Aorta (tissue), 5 donors: ENCODE measurements at regions of chr2 and their contacts with region 1.

Region 1: DNA sequence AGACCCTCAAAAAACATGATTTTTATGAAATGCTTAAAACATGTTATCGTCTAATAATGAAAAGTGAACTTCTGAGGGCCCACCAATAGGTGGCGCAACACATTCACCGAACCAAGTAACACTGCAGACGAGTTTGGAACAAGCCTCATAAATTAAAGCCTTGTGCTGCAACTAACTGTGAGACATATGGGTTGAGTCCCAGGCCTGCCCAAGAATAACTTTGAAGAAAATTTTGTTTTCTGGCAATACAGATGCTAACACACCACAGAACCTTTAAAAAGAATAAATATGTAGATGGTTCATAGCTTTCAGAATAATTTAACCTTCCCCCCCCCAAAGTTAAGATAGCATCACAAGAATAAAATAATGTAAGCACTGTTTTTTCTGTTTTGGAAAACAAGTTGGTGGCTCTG is 285.8 kb downstream of the RNF144A start:
- DNase-seq: peak in 1 of 2 donors; percentile 59
- ATAC-seq: peak; percentile 84
- H3K4me3 ChIP-seq: no peak overlapping the region
- H3K27ac ChIP-seq: no peak overlapping the region
- H3K4me1 ChIP-seq: no peaks in the 10 kb centered on the region
- H3K27me3 ChIP-seq: no peaks in the 10 kb centered on the region

Region 2: DNA sequence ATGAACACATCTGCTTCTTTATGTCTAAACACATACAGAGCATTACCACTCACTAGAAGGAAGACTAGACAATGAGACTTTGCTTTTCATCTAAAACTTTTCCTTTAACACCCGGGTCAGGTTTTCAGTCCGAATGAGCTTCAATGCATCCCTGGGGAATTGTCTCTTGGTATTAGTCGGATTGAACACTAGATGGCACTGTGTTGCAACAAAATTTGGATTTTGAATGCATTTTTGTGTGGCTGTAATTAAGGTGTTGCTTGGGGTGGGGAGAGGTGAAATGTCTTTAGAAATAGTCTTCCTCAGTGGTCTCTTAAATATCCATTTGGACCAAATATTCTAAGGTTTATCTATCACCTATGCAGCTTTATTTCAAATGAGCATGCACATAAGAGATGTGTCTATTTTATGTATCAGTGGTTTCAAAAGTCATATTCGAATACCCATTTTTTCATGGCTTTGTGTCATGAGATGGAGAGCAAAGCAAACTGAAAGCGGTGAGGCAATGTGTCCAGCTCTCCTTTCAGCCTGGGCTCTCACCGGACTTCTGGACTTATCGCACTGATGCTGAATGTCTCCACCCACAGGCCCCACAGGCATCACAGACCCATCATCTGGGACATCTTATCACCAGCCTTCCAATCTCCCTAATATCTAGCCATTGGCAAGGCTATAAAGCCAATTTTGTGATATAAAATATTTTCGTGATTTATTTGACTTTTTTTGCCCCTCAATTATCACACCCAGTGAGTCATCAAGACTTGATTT is 224.4 kb after region 1 on chr2:
- intact Hi-C with region 1: loop called in 1 of 2 experiments (anchors 5 kb)
- DNase-seq: no peak
- ATAC-seq: peak; percentile 66
- H3K4me3 ChIP-seq: no peak overlapping the region
- H3K27ac ChIP-seq: no peak overlapping the region
- H3K4me1 ChIP-seq: no peaks in the 10 kb centered on the region
- H3K27me3 ChIP-seq: no peaks in the 10 kb centered on the region

Region 3: DNA sequence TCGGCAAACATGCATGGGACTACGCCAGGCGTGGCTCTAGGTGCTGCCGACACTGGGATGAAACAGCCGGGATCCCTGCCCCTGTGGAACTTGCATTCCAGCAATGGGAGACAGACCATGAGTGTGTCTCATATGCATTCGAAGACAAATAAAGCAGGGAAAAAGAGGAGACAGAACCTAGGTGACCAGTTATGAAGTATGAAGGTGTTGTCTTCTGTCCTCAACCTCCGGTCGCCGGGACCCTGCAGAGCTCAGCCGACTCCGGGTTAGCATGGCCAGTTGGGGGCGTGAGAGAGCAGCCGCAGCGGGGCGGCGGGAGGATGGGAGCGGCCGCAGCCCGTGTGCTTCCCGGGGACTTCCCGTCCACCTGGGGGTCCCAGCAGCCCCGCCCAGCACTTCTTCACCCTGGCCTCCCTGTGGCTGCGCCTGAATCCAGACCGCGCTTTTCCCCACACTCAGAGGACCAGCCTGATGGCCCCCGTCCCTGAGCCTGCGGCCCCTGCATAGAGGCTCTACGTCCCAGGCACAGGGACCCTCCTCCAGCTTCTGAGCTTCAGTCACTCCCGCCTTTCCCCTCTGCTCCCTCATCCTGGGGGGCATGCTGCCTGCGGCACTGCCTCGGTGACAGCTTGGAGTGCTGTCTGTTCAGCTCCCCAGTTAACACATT is 1490.2 kb after region 1 on chr2:
- intact Hi-C with region 1: loop called (anchors 10 kb)
- DNase-seq: peak; percentile 62 to 84
- ATAC-seq: peak; percentile 83
- H3K4me3 ChIP-seq: no peak overlapping the region
- H3K27ac ChIP-seq: no peak overlapping the region
- H3K4me1 ChIP-seq: peaks cover 0 to 2% of the 10 kb centered on the region in 2 donors
- H3K27me3 ChIP-seq: no peaks in the 10 kb centered on the region